ENCODE measurements at regions of chr19 and their contacts with region 1.

Region 1: GRCh38 chr19:18349524-18350128 is 9.2 kb downstream of the PGPEP1 start:
- DNase-seq: peak; percentile 65
- ATAC-seq: peak; percentile 97
- H3K4me3 ChIP-seq: no peak overlapping the region
- H3K27ac ChIP-seq: no peak overlapping the region
- H3K4me1 ChIP-seq: peaks cover 1% of the 10 kb centered on the region; the same call in 1 of the 2 replicates
- H3K27me3 ChIP-seq: no peaks in the 10 kb centered on the region
- CTCF ChIP-seq: peak; percentile 96
- POLR2A ChIP-seq: peak; percentile 37; the same call in 1 of the 2 replicates
- RAD21 ChIP-seq: peak; percentile 96

Region 2: GRCh38 chr19:18408053-18408476 is 58.4 kb after region 1 on chr19:
- CTCF ChIA-PET with region 1: interaction called, 16 read pairs
- POLR2A ChIA-PET with region 1: interaction called, 3 read pairs
- dilution Hi-C with region 1: no loop called
- in situ Hi-C with region 1: loop called (anchors 5 kb)
- intact Hi-C with region 1: loop called (anchors 1 kb)
- DNase-seq: no peak
- ATAC-seq: no peak; the same call in 1 of the 2 replicates
- H3K4me3 ChIP-seq: no peak overlapping the region
- H3K27ac ChIP-seq: no peak overlapping the region
- H3K4me1 ChIP-seq: no peaks in the 10 kb centered on the region
- H3K27me3 ChIP-seq: no peaks in the 10 kb centered on the region
- CTCF ChIP-seq: peak; percentile 33; the same call in 1 of the 2 replicates
- POLR2A ChIP-seq: no peak
- RAD21 ChIP-seq: peak; percentile 47

Region 3: DNA sequence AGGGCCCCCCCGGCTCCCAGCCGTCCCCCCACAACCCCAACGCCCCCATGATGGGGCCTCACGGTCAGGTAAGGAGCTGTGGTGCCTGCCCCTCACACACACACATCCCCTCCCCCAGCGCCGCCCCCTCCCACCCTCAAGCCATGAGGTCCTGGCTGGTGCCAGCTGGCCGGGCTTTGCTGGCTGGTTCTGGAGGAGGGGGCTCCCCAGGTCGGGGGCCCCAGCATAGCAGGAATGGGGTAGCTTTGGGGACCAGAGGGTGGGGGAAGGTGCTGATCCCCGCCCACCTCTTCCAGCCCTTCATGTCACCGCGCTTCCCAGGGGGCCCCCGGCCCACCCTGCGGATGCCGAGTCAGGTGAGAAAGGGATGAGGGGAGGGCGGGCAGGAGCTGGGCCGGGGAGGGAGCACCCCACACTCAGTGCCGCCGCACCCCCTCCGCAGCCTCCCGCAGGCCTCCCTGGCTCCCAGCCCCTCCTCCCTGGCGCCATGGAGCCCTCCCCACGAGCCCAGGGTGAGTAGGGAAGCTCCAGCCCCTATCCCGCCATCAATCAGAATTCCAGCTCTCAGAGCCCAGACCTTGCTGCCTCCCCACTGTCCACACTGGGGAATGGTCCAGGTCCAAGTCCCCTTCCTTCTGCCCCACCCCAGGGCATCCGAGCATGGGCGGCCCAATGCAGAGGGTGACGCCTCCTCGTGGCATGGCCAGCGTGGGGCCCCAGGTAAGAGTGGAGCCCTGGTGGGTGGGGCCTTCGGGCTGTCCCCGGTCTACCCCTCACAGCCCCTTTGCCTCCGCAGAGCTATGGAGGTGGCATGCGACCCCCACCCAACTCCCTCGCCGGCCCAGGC is 81.9 kb after region 1 on chr19:
- CTCF ChIA-PET with region 1: no interaction called
- POLR2A ChIA-PET with region 1: interaction called, 26 read pairs
- dilution Hi-C with region 1: no loop called
- in situ Hi-C with region 1: no loop called
- intact Hi-C with region 1: no loop called
- DNase-seq: no peak
- ATAC-seq: no peak
- H3K4me3 ChIP-seq: no peak overlapping the region
- H3K27ac ChIP-seq: no peak overlapping the region
- H3K4me1 ChIP-seq: peaks cover 11% of the 10 kb centered on the region
- H3K27me3 ChIP-seq: no peaks in the 10 kb centered on the region
- CTCF ChIP-seq: no peak
- POLR2A ChIP-seq: no peak
- RAD21 ChIP-seq: no peak